Right lobe of liver (tissue), 6 donors: ENCODE measurements at regions of chr10 and their contacts with region 1.

Region 1: DNA sequence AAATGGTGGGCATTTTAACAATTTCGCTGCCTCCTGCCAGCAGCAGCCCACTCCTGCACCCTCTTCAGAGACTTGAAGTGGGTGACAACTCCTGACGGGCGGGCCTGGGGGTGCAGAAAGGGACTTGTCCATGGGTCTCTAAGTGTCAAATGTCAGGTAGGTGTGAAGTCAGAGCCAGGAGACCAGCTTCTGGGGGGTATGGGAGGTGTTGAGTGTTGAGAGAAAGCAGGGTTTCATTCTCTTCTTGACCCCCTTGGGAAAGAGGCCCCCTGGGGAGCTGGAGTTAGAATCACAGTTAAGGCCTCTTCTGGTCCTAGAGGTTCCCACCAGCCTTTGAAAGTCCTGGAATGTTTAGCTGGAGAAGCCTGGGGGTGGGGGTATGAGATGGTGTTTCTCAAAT is 11.6 kb upstream of the PALD1 start:
- DNase-seq: no peak
- ATAC-seq: no peak
- H3K4me3 ChIP-seq: no peak overlapping the region
- H3K27ac ChIP-seq: no peak overlapping the region
- H3K4me1 ChIP-seq: no peaks in the 10 kb centered on the region
- H3K27me3 ChIP-seq: no peaks in the 10 kb centered on the region
- CTCF ChIP-seq: no peak
- POLR2A ChIP-seq: no peak

Region 2: DNA sequence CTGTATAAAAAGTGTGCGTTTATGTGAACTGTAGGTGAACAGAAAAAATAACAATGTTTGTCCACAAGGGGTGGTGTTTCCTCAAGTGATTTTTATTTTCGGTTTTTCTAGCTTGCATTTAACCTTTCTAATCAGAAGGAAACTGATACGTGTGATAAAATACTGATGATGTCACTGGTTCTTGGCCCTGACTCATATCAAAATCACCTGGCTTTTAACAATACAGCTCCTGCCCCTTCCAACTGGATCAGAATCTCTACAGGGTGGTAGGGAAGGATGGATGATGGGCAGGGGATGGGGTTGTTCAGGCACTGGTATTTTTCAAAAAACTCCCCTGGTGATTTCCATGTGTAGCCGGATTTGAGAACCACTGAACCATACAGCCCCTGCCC is 194.0 kb before region 1 on chr10:
- intact Hi-C with region 1: no loop called
- DNase-seq: no peak
- ATAC-seq: peak in 3 of 4 donors; percentile 35 to 75 (median 45)
- H3K4me3 ChIP-seq: no peak overlapping the region
- H3K27ac ChIP-seq: no peak overlapping the region
- H3K4me1 ChIP-seq: no peaks in the 10 kb centered on the region
- H3K27me3 ChIP-seq: no peaks in the 10 kb centered on the region
- CTCF ChIP-seq: peak; percentile 48 to 54 (median 50)
- POLR2A ChIP-seq: no peak

Region 3: DNA sequence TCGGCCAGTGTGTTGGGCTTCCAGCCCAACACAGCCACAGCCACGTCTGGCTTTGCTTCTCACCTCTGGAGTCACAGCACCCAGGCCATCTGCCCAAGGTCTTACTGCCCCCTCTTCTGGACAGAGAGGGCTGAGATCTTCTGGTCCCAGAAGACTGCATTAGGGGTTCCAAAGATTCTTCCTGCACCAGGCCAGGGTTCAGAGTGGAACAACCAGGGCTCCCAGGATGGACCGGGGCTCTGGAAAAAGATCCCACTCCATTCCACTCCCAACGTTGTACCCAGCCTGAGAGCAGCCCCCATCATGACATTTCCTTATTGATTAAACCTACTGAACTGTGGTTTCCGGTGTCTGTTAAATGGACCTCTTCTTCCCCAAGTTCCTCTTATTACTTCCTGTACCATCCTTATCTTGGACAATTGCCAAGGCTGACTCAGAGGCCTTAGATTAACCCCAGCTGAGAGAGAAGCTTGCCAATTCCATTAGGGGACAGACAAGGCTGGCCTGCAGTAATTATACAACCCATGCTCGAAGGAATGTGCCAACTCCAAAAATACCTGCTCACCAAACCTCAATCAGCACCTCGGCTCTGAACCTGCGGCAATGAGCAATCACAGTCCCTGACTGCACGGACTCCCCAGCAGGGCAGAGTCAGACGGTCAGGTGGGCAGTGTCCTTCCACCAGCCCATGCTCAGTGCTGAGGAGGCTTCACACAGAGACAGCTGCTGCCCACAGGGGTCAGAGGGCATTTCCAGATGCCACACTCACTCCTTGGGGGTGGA is 135.3 kb before region 1 on chr10:
- intact Hi-C with region 1: no loop called
- DNase-seq: peak in 1 of 3 donors; percentile 49
- ATAC-seq: peak; percentile 72 to 91 (median 87)
- H3K4me3 ChIP-seq: no peak overlapping the region
- H3K27ac ChIP-seq: peak overlapping the region in 1 of 3 donors; percentile 34
- H3K4me1 ChIP-seq: peaks cover 0 to 16% (median 9%) of the 10 kb centered on the region in 4 donors
- H3K27me3 ChIP-seq: no peaks in the 10 kb centered on the region
- CTCF ChIP-seq: peak in 1 of 4 donors; percentile 19
- POLR2A ChIP-seq: no peak

Region 4: DNA sequence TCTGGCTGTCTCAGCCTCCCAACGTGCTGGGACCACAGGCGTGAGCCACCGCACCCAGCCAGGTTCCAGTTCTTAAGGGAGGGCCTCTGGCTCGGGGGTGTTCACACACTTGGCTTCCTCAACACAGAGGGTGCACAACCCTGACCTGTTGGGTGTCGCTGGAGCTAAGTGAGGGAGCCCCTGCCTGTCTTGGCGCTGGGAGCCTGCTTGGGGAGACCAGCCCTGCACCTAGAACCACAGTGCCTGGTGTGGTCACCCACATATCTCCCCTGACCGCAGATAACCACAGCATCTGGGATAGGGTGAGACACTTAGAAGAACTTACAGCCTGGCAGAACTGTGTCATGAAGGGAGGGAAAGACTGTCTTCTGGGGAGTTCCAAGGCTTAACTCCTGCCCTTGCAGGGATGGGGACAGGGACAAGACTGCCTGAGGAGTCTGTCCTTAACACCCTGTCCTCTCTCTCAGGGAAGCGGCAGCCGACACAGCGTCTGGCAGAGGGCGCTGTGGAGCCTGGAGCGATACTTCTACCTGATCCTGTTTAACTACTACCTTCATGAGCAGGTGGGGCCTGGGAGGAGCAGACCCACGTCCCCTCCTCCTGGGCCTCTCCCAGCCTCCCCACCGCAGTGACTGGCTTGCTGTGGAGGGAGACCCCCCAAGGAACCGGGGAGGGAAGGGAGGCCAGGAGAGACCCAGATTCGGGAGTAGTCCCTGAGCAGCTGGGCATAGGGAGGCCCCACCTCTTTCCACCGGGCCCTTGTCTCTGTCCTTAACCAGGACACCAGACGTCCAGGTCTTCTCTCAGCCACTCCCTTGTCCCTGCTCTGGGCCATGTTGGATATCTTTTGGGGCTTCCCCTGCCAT is 70.6 kb after region 1 on chr10:
- intact Hi-C with region 1: loop called (anchors 5 kb)
- DNase-seq: no peak
- ATAC-seq: peak in 2 of 4 donors; percentile 13 to 14
- H3K4me3 ChIP-seq: no peak overlapping the region
- H3K27ac ChIP-seq: no peak overlapping the region
- H3K4me1 ChIP-seq: peaks cover 0 to 7% (median 0%) of the 10 kb centered on the region in 4 donors
- H3K27me3 ChIP-seq: no peaks in the 10 kb centered on the region
- CTCF ChIP-seq: peak in 3 of 4 donors; percentile 9 to 21 (median 13)
- POLR2A ChIP-seq: no peak